ENCODE measurements at regions of chr14 and their contacts with region 1.

Region 1: DNA sequence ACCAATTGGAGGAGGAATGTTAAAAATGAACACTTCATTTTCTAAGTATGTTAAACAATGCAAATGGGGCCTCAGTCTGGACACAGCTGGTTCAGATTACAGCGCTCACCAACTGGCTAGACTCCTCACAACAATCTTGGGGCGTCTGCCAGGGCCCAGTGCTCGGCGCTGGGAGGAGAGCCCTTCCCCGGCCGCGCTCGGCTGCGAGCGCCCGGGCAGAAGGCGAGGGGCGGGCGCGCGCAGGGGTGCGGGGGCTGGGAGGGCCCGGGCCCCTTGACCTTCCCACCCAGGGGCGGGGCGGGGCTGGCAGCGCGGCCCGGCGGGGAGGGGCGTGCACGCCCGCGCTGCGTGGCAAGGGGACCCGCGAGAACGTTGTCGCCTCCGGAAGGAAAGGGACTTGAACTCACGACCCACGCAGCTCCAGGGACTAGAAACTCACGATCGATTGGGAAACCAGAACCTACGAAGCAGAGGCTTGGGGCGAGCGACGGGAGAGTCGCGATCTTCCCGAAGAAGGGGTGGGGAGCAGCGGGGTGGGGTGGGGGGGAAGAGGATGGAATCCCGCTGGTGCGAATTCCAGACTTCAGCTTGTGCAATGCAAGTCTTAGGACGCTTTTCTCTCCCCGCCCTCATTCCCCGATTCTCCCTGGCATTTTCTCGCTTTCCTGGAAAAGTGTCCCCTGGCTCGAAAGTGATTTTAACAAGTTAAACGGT is at the start of gene FBLN5:
- DNase-seq: peak; percentile 88
- ATAC-seq: peak; percentile 78
- H3K4me3 ChIP-seq: peak within 1 kb of the TSS; percentile 72
- H3K27ac ChIP-seq: peak within 1 kb of the TSS; percentile 91
- H3K4me1 ChIP-seq: peaks cover 6% of the 10 kb centered on the region
- H3K27me3 ChIP-seq: no peaks in the 10 kb centered on the region
- CTCF ChIP-seq: no peak
- POLR2A ChIP-seq: no peak; the same call in 1 of the 2 replicates
- RAD21 ChIP-seq: no peak
- total RNA-seq, gene FBLN5: 9.7 and 10.6 TPM in 2 replicates

Region 2: DNA sequence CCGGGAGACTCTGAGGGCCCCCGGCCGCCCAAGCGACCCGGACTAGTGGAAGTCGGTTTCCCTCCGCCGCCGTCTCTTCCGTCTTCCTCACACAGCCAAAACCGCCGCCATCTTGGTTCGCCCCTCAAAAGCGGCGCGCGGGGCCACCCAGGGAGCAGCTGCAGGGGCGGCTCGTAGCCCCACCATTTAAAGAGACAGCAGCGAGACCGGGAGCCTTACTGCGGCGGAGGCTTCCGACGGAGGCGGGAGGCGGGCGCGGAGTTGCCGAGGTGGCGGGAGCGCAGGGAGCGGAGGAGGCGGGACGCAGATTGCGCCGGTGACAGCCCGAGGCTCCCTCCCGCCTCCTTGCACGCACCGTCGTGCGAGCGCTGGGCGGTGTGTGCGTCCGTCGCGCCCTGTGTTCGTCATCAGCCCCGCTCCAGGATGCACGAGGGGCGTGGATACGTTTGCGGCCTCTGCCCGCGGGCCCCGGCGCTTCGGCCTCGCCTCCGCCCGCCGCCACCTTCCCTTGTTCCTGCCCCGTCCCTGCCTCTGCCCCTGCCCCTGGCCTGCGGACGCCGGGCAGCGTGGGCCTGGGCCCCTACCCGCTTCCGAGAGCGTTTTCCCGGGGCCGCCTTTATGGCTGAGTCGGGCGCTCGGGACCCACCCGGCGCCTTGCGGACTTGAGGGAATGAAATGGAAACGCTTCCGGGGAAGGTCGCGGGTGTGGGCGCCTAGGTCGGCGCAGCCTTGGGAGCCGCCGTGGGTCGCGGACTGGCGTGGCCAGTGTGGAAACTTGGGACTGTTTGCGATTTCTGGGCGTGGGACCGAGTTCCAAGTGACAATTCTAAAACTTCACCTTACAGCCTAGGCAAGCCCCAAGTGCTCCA is 437.2 kb before region 1 on chr14 and contains the start of gene PPP4R3A:
- CTCF ChIA-PET with region 1: no interaction called
- POLR2A ChIA-PET with region 1: no interaction called
- dilution Hi-C with region 1: no loop called
- in situ Hi-C with region 1: no loop called
- intact Hi-C with region 1: loop called (anchors 5 kb)
- DNase-seq: peak; percentile 98
- ATAC-seq: peak; percentile 91
- H3K4me3 ChIP-seq: peak within 1 kb of the TSS; percentile 100
- H3K27ac ChIP-seq: peak within 1 kb of the TSS; percentile 96
- H3K4me1 ChIP-seq: peaks cover 3% of the 10 kb centered on the region; the same call in 1 of the 2 replicates
- H3K27me3 ChIP-seq: no peaks in the 10 kb centered on the region
- CTCF ChIP-seq: no peak
- POLR2A ChIP-seq: peak; percentile 94
- RAD21 ChIP-seq: no peak
- total RNA-seq, gene PPP4R3A: 28.9 and 46.4 TPM in 2 replicates

Region 3: GRCh38 chr14:91968280-91968679 is 20.7 kb after region 1 on chr14:
- CTCF ChIA-PET with region 1: no interaction called
- POLR2A ChIA-PET with region 1: no interaction called
- dilution Hi-C with region 1: no loop called
- in situ Hi-C with region 1: no loop called
- intact Hi-C with region 1: loop called (anchors 2 kb)
- DNase-seq: no peak
- ATAC-seq: no peak
- H3K4me3 ChIP-seq: no peak overlapping the region
- H3K27ac ChIP-seq: no peak overlapping the region
- H3K4me1 ChIP-seq: peaks cover 2% of the 10 kb centered on the region; the same call in 1 of the 2 replicates
- H3K27me3 ChIP-seq: no peaks in the 10 kb centered on the region
- CTCF ChIP-seq: no peak
- POLR2A ChIP-seq: no peak
- RAD21 ChIP-seq: no peak

Region 4: GRCh38 chr14:91980127-91980741 is 32.6 kb after region 1 on chr14:
- CTCF ChIA-PET with region 1: no interaction called
- POLR2A ChIA-PET with region 1: interaction called, 15 read pairs
- dilution Hi-C with region 1: no loop called
- in situ Hi-C with region 1: no loop called
- intact Hi-C with region 1: no loop called
- DNase-seq: peak; percentile 96
- ATAC-seq: peak; percentile 81
- H3K4me3 ChIP-seq: no peak overlapping the region
- H3K27ac ChIP-seq: no peak overlapping the region
- H3K4me1 ChIP-seq: peaks cover 3% of the 10 kb centered on the region; the same call in 1 of the 2 replicates
- H3K27me3 ChIP-seq: no peaks in the 10 kb centered on the region
- CTCF ChIP-seq: no peak
- POLR2A ChIP-seq: no peak
- RAD21 ChIP-seq: no peak

Region 5: GRCh38 chr14:91996948-91997371 is 49.3 kb after region 1 on chr14:
- CTCF ChIA-PET with region 1: interaction called, 19 read pairs
- POLR2A ChIA-PET with region 1: no interaction called
- dilution Hi-C with region 1: no loop called
- in situ Hi-C with region 1: no loop called
- intact Hi-C with region 1: loop called (anchors 1 kb)
- DNase-seq: peak; percentile 72
- ATAC-seq: peak; percentile 75
- H3K4me3 ChIP-seq: no peak overlapping the region
- H3K27ac ChIP-seq: no peak overlapping the region
- H3K4me1 ChIP-seq: no peaks in the 10 kb centered on the region
- H3K27me3 ChIP-seq: no peaks in the 10 kb centered on the region
- CTCF ChIP-seq: peak; percentile 66
- POLR2A ChIP-seq: no peak
- RAD21 ChIP-seq: peak; percentile 65

Region 6: GRCh38 chr14:92106143-92106926 is 158.7 kb after region 1 on chr14 and contains the start of gene ATXN3:
- CTCF ChIA-PET with region 1: no interaction called
- POLR2A ChIA-PET with region 1: no interaction called
- dilution Hi-C with region 1: no loop called
- in situ Hi-C with region 1: no loop called
- intact Hi-C with region 1: loop called (anchors 10 kb)
- DNase-seq: peak; percentile 99
- ATAC-seq: peak; percentile 95
- H3K4me3 ChIP-seq: peak within 1 kb of the TSS; percentile 85
- H3K27ac ChIP-seq: peak within 1 kb of the TSS; percentile 91
- H3K4me1 ChIP-seq: peaks cover 7% of the 10 kb centered on the region; the same call in 1 of the 2 replicates
- H3K27me3 ChIP-seq: no peaks in the 10 kb centered on the region
- CTCF ChIP-seq: peak; percentile 93
- POLR2A ChIP-seq: peak; percentile 78
- RAD21 ChIP-seq: peak; percentile 48
- total RNA-seq, gene ATXN3: 9.0 and 38.3 TPM in 2 replicates